Colonic mucosa (tissue), 4 donors: ENCODE measurements at regions of chr2 and their contacts with region 1.

Region 1: DNA sequence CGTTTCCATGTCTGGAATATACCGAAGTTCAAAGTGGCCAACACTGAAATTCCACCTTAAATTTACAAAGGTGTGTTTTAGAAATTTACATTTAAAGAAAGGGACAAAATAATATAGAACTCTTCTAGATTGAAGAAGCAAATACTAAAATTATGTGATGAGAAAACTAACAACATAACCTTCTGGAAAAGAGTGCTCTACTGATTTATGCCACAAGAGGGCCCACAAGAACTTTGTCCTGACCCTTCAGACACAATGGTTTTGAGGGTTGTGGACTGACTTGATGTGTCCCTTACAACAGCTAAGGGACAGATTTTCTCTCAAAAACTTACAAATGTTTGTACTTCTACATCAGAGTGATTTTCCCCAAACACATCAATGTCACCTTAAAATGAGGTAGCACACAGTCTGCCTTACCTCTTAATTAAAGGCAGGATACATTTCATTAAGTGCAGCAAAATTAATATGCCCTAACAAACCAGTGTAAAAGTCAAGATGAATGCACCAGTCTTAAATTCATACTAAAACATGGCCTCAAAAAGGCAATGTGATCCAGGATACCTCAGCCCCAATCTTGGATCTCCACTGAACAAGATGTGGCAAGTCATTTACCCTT is 36.2 kb downstream of the EIF2AK3 start:
- DNase-seq: peak; percentile 57
- H3K4me3 ChIP-seq: no peak overlapping the region
- H3K27ac ChIP-seq: no peak overlapping the region
- H3K4me1 ChIP-seq: no peaks in the 10 kb centered on the region
- H3K27me3 ChIP-seq: no peaks in the 10 kb centered on the region
- CTCF ChIP-seq: peak; percentile 54

Region 2: GRCh38 chr2:88669371-88670214 is 78.5 kb after region 1 on chr2:
- intact Hi-C with region 1: loop called (anchors 2 kb)
- DNase-seq: peak; percentile 31
- H3K4me3 ChIP-seq: no peak overlapping the region
- H3K27ac ChIP-seq: no peak overlapping the region
- H3K4me1 ChIP-seq: no peaks in the 10 kb centered on the region
- H3K27me3 ChIP-seq: no peaks in the 10 kb centered on the region
- CTCF ChIP-seq: peak; percentile 2